ENCODE measurements at regions of chr1 and their contacts with region 1.

Region 1: DNA sequence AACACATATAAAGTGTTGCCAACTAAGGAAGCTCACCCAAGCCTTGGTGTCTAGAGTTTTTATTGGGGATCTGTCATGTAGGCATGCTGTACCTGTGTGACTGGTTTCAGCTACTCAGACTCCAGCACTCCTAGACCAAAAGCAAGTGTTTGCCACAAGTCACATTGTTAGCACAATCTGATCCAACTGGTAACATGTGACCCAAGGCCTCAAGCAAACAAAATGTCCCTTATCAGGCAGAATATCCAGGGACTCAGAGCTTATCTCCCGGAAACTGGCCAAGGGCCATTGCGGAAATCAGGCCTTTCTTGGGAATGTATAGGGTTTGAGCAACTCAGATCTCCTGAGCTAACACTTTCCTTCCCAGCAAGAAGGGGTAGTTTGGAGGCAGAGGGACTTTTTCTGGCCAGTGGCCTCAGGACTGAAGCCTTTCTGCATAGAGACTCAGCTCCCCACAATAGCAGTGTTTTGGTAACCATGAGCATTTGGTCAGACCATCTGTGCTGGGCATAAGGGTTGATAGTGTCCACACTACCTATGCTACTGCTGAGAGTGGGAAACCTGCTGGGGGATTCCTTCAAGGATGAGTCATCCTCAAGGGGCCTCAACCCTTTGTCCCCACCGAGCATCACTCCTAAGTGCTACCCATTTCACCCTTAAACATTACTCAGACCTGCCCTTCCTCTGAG is 29.6 kb downstream of the NHLH2 start:
- DNase-seq: peak; percentile 75
- ATAC-seq: peak; percentile 92
- H3K4me3 ChIP-seq: no peak overlapping the region
- H3K27ac ChIP-seq: peak overlapping the region; percentile 20
- H3K4me1 ChIP-seq: peaks cover 44% of the 10 kb centered on the region
- H3K27me3 ChIP-seq: no peaks in the 10 kb centered on the region
- CTCF ChIP-seq: no peak

Region 2: DNA sequence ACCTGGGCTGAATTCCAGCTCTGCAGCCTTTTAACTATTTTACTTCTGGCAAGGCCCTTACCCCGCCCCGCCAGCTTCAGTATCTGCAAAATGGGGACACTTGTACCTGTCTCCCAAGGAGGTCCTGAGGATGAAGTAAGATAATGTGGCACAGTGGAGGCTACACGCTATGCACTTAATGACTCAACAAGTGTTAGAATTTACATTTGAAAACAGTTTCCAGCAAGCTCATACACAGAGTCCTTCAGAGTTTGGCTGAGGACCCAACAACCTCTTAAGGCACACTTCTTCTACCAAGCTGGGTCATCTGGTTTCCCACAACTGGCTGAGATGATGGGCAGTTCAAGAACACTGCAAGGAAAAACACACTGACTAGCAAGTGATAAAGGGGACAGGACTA is 134.8 kb after region 1 on chr1:
- intact Hi-C with region 1: no loop called
- DNase-seq: peak; percentile 49
- ATAC-seq: peak; percentile 92 to 95
- H3K4me3 ChIP-seq: no peak overlapping the region
- H3K27ac ChIP-seq: no peak overlapping the region
- H3K4me1 ChIP-seq: peaks cover 7% of the 10 kb centered on the region
- H3K27me3 ChIP-seq: no peaks in the 10 kb centered on the region
- CTCF ChIP-seq: no peak

Region 3: DNA sequence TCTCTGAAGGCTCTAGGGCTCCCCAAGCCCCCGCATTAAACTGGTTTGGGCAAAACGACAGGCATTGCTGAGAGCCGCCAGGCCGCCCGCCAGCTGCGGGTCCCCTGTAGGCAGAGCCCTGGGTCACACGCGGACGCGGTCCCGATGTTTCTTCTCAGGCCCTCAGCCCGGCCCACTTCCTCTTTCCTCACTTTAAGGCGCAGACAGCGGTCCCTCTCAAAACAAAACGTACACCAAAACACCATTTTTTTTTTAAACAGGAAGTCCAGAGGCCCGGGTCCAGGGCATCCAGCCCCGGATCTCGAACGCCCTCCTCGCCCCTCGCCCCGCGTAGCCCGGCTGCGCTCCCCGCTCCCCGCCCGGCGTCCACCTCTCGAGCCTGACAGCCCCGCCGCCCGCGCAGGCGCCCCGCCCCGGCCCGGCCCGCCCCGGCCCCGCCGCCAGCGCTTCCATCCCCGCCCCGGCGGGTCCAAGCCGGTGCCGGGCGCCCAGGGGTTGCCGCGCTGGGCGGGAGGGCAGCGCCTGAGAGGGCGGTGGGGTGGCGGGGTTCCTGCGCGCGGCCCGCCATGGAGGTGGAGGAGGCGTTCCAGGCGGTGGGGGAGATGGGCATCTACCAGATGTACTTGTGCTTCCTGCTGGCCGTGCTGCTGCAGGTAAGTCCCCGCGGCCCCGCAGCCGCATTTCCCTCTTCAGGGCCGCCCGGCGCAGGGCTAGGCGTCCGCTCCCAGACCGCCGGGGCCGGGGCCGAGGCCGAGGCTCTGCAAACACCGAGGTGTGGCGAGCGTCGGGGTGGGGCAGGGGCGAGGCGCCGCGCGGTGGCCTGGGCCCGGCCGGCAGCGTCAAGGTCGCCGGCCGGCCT is 165.0 kb after region 1 on chr1 and contains the start of gene SLC22A15:
- intact Hi-C with region 1: loop called (anchors 10 kb)
- DNase-seq: peak; percentile 91
- ATAC-seq: peak; percentile 85 to 86
- H3K4me3 ChIP-seq: peak within 1 kb of the TSS; percentile 70
- H3K27ac ChIP-seq: peak within 1 kb of the TSS; percentile 87
- H3K4me1 ChIP-seq: peaks cover 25% of the 10 kb centered on the region
- H3K27me3 ChIP-seq: no peaks in the 10 kb centered on the region
- CTCF ChIP-seq: peak; percentile 10
- total RNA-seq, gene SLC22A15: 26.8 TPM

Region 4: DNA sequence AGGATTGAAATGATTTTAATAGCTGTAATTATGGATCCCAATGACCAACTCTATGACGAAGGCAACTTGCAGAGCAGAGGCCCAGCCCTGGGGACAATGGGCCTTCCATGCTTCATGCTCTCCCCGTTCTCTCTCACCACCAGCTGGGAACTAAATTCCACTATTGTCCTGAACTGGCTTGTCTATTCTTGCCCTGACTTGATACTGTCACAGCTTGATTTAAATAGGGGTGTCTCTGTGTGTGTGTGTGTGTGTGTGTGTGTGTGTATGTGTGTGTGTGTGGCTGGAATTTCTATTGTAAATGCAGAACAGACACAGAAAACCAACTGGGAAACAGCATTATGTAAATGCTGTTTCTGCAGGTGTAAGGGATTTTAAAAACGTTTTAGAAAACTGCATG is 222.0 kb after region 1 on chr1:
- intact Hi-C with region 1: no loop called
- DNase-seq: no peak
- ATAC-seq: no peak
- H3K4me3 ChIP-seq: no peak overlapping the region
- H3K27ac ChIP-seq: no peak overlapping the region
- H3K4me1 ChIP-seq: no peaks in the 10 kb centered on the region
- H3K27me3 ChIP-seq: no peaks in the 10 kb centered on the region
- CTCF ChIP-seq: no peak

Measured in lower lobe of right lung (tissue), 2 donors.